ENCODE measurements at regions of chr5 and their contacts with region 1.

Region 1: DNA sequence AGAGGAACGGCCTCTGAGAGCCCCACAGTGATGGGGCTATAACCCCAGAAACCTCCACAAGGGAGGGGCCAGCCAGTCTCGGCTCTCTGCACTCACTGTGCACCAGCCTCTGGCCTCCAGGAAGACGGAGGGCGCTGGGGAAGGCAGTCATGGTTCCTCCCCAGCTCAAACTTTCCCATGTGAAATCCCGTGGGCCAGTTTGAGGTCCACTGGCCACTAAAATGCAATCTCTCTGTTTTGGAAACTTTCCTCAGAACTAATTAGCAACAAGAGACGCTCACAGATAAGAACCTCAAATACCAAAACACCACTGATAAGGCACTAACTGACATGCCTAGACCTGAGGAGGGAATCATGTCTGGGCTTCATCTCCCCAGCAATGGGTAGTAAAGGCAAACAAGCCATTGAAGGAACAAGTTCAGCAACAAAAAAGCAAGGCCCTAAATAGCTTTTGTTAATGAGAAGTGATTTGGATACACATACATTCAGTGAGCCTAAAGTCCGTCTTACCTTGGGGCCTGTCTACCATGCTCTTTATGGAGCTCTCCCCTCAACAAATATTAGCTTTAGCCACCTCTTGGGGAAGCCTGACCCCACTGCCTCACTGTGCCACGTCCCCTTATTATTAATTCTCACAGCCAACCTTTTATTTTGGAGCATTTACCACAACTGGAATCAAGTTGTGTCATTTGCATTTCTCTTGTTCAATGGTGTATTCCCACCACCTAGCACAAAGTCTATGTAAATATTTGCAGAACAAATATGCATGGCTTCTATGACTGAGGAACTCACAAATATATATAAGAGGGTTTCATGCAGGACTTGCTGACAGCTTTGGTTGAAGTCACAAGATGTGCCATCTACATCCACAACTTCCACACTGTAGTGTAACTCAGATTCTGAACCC is 56.1 kb upstream of the GLRX start:
- DNase-seq: no peak
- H3K4me3 ChIP-seq: no peak overlapping the region
- H3K27ac ChIP-seq: no peak overlapping the region
- H3K4me1 ChIP-seq: no peaks in the 10 kb centered on the region; a peak in 1 of 7 replicates
- H3K27me3 ChIP-seq: no peaks in the 10 kb centered on the region
- CTCF ChIP-seq: no peak
- EP300 ChIP-seq: no peak
- POLR2A ChIP-seq: no peak
- RAD21 ChIP-seq: no peak

Region 2: DNA sequence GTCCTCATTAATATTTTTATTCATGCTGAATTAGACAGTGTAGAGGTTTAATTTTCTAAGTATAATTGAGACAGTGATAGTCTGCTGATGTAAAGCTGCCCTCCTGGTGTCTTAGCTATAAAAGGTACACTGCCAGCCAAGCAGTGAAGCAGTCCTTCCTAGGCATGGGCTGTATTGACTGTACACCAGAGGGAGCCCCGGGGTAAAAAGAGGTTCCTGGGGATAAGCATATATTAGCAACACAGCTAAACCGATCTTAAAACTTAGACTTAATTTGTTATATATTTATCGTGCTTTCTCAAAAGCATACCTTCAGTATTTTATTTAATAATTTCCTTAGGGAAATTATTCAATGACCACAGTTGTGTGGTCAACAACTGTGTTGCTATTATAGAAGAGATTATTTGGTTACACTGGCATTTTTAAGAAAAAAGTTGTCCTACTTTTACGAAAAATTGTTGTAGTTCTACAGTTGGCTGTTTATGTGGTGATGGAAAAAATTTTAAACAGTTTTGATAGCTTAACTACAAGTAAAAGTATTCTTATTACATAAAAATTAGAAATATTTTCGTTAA is 14.2 kb after region 1 on chr5:
- CTCF ChIA-PET with region 1: interaction called, 34 read pairs
- POLR2A ChIA-PET with region 1: no interaction called
- DNase-seq: no peak
- H3K4me3 ChIP-seq: no peak overlapping the region
- H3K27ac ChIP-seq: no peak overlapping the region
- H3K4me1 ChIP-seq: peaks cover 0 to 14% (median 7%) of the 10 kb centered on the region in 4 experiments; a peak in 4 of 7 replicates
- H3K27me3 ChIP-seq: no peaks in the 10 kb centered on the region
- CTCF ChIP-seq: peak; percentile 47 to 64 (median 63)
- EP300 ChIP-seq: no peak
- POLR2A ChIP-seq: no peak
- RAD21 ChIP-seq: peak; percentile 82 to 85

Measured in H1 (cell line).